GM12878 (cell line): ENCODE measurements at regions of chr4 and their contacts with region 1.

Region 1: DNA sequence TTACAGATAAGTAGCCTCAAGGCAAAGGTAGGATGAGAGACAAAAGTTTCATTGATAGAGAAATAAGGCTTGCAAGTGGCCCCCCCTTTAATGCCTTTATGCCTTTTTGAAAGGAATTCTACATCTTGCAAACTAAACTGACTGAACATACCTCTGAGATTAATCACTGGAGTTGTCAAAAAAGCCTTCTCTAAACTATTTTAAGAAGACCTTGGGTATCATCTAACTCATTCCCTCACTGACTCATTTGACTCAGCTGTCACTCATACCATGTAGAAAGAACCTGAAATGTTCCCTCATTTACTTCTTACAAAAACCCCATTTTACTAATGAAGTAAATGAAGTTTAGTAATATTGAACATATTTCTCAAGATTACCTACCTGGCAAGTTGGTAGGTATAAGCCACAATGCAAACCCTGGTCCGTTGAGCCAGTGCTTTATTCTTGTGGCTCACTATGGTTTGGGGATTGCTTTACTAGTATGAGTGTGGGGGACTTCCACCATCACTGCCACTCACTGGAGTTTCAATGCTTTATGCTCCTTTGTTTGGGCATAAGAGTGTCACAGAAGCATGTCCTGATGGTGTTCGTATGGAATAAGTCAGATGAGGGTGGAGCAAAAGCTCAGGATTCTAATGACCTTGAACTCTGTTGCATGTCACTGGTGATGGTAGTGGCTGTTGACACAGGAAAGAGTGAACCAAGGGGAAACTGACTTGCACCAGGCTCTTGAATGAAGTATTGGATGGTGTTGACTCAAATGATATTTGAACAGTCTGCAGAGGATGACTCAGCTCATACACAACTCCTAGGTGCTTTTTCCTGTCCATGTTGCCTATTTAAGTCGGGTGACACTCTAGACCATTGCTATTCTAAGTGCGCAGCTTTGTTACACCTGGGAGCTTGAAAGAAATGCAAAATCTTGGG is 305.5 kb upstream of the EMCN start:
- DNase-seq: peak; percentile 68
- ATAC-seq: peak; percentile 80
- H3K4me3 ChIP-seq: no peak overlapping the region
- H3K27ac ChIP-seq: peak overlapping the region; percentile 51
- H3K4me1 ChIP-seq: peaks cover 18% of the 10 kb centered on the region
- H3K27me3 ChIP-seq: no peaks in the 10 kb centered on the region
- CTCF ChIP-seq: no peak
- EP300 ChIP-seq: peak in 1 of 2 experiments; percentile 45; a peak in 2 of 4 replicates
- POLR2A ChIP-seq: no peak
- RAD21 ChIP-seq: no peak

Region 2: GRCh38 chr4:100641336-100641735 is 182.0 kb before region 1 on chr4:
- CTCF ChIA-PET with region 1: no interaction called
- POLR2A ChIA-PET with region 1: no interaction called
- RAD21 ChIA-PET with region 1: no interaction called
- SMC1A ChIA-PET with region 1: no interaction called
- in situ Hi-C with region 1: no loop called
- intact Hi-C with region 1: no loop called
- DNase-seq: no peak
- ATAC-seq: no peak
- H3K4me3 ChIP-seq: no peak overlapping the region
- H3K27ac ChIP-seq: no peak overlapping the region
- H3K4me1 ChIP-seq: no peaks in the 10 kb centered on the region
- H3K27me3 ChIP-seq: no peaks in the 10 kb centered on the region
- CTCF ChIP-seq: no peak
- EP300 ChIP-seq: no peak
- POLR2A ChIP-seq: no peak
- RAD21 ChIP-seq: no peak

Region 3: GRCh38 chr4:100722866-100723459 is 100.4 kb before region 1 on chr4:
- CTCF ChIA-PET with region 1: no interaction called
- POLR2A ChIA-PET with region 1: no interaction called
- RAD21 ChIA-PET with region 1: no interaction called
- SMC1A ChIA-PET with region 1: no interaction called
- in situ Hi-C with region 1: no loop called
- intact Hi-C with region 1: loop called (anchors 5 kb)
- DNase-seq: no peak
- ATAC-seq: peak; percentile 71
- H3K4me3 ChIP-seq: no peak overlapping the region
- H3K27ac ChIP-seq: no peak overlapping the region
- H3K4me1 ChIP-seq: no peaks in the 10 kb centered on the region
- H3K27me3 ChIP-seq: no peaks in the 10 kb centered on the region
- CTCF ChIP-seq: no peak
- EP300 ChIP-seq: no peak
- POLR2A ChIP-seq: no peak
- RAD21 ChIP-seq: no peak

Region 4: GRCh38 chr4:100848869-100849268 is 25.5 kb after region 1 on chr4:
- CTCF ChIA-PET with region 1: interaction called, 13 read pairs
- POLR2A ChIA-PET with region 1: no interaction called
- RAD21 ChIA-PET with region 1: interaction called, 7 read pairs
- SMC1A ChIA-PET with region 1: interaction called, 6 read pairs
- in situ Hi-C with region 1: no loop called
- intact Hi-C with region 1: no loop called
- DNase-seq: no peak
- ATAC-seq: peak; percentile 91
- H3K4me3 ChIP-seq: no peak overlapping the region
- H3K27ac ChIP-seq: no peak overlapping the region
- H3K4me1 ChIP-seq: no peaks in the 10 kb centered on the region
- H3K27me3 ChIP-seq: no peaks in the 10 kb centered on the region
- CTCF ChIP-seq: peak; percentile 33 to 45 (median 34); a peak in 4 of 6 replicates
- EP300 ChIP-seq: no peak
- POLR2A ChIP-seq: no peak
- RAD21 ChIP-seq: peak; percentile 50

Region 5: DNA sequence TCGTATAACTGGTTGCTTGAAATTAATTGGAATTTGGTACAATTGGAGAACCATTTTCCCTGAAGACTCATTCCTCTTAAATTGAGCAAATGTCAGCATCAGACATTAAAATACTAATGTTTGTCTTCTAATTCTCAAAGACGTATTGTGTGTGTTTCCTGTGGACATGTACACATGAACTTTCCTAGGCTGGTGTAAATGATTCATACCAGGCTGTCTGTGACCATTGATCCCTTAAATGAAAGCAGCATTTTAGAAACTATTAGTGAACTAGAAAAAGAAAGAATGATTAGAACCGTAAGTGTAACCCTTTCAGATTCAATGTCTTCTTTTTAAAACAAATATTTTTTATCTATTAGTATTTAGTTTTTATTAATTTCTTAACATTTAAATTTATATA is 191.1 kb after region 1 on chr4:
- CTCF ChIA-PET with region 1: no interaction called
- POLR2A ChIA-PET with region 1: no interaction called
- RAD21 ChIA-PET with region 1: interaction called, 5 read pairs
- SMC1A ChIA-PET with region 1: interaction called, 10 read pairs
- in situ Hi-C with region 1: loop called (anchors 10 kb)
- intact Hi-C with region 1: loop called (anchors 2 kb)
- DNase-seq: peak; percentile 57
- ATAC-seq: peak; percentile 66
- H3K4me3 ChIP-seq: 0 out of 2 replicates have a peak overlapping the region, but pooled peaks have one; percentile 10
- H3K27ac ChIP-seq: no peak overlapping the region; the same call in 1 of the 2 replicates
- H3K4me1 ChIP-seq: peaks cover 61% of the 10 kb centered on the region
- H3K27me3 ChIP-seq: no peaks in the 10 kb centered on the region
- CTCF ChIP-seq: no peak
- EP300 ChIP-seq: peak; percentile 26 to 65; a peak in 2 of 4 replicates
- POLR2A ChIP-seq: no peak
- RAD21 ChIP-seq: no peak

Region 6: DNA sequence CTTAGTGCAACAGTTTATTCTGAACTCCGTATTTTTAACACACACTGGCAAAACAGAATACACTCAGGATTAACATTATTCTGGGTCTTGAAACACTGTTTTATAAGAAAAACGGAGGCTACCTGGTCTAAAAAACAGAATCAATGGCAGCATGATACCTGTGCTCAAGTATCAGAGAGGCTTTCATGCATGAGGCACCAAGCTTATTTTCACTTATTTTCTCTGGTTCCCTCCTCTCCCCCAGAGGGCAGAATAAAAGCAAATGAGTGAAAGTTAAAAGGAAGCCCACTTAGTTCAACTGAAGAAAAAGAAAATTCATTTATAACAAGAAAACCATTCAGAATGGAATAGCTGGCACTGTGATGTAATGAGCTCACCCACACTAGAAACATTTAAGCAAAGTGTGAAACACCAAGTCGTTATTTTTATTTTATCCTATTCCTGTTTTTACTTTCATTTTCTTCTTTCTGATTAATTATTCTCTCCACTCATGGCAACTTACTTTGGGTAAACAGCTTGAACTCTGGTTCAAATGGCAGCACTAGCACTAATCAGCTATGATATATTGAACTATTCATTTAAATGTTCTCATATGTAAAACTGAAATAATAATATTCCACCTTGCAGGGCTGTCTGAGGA is 312.2 kb after region 1 on chr4:
- CTCF ChIA-PET with region 1: no interaction called
- POLR2A ChIA-PET with region 1: interaction called, 6 read pairs
- RAD21 ChIA-PET with region 1: interaction called, 3 read pairs
- SMC1A ChIA-PET with region 1: interaction called, 3 read pairs
- in situ Hi-C with region 1: no loop called
- intact Hi-C with region 1: loop called (anchors 10 kb)
- DNase-seq: no peak
- ATAC-seq: peak; percentile 80
- H3K4me3 ChIP-seq: 0 out of 2 replicates have a peak overlapping the region, but pooled peaks have one; percentile 39
- H3K27ac ChIP-seq: no peak overlapping the region; the same call in 1 of the 2 replicates
- H3K4me1 ChIP-seq: peaks cover 10% of the 10 kb centered on the region; the same call in 1 of the 2 replicates
- H3K27me3 ChIP-seq: no peaks in the 10 kb centered on the region
- CTCF ChIP-seq: no peak
- EP300 ChIP-seq: peak in 1 of 2 experiments; percentile 27; a peak in 1 of 4 replicates
- POLR2A ChIP-seq: no peak
- RAD21 ChIP-seq: no peak

Region 7: GRCh38 chr4:101347557-101348366 is 524.4 kb after region 1 on chr4:
- CTCF ChIA-PET with region 1: no interaction called
- POLR2A ChIA-PET with region 1: no interaction called
- RAD21 ChIA-PET with region 1: no interaction called
- SMC1A ChIA-PET with region 1: no interaction called
- in situ Hi-C with region 1: no loop called
- intact Hi-C with region 1: loop called (anchors 10 kb)
- DNase-seq: peak; percentile 83
- ATAC-seq: peak; percentile 91
- H3K4me3 ChIP-seq: peak overlapping the region; percentile 90
- H3K27ac ChIP-seq: peak overlapping the region; percentile 47
- H3K4me1 ChIP-seq: peaks cover 10% of the 10 kb centered on the region
- H3K27me3 ChIP-seq: peaks cover 1 to 4% of the 10 kb centered on the region in 2 experiments; a peak in 1 of 4 replicates
- CTCF ChIP-seq: no peak
- EP300 ChIP-seq: no peak
- POLR2A ChIP-seq: peak; percentile 80
- RAD21 ChIP-seq: no peak